H1 (cell line): ENCODE measurements at regions of chr10 and their contacts with region 1.

Region 1: GRCh38 chr10:120221873-120222485 is 235.0 kb upstream of the PLPP4 start:
- DNase-seq: peak; percentile 39 to 58
- H3K4me3 ChIP-seq: no peak overlapping the region
- H3K27ac ChIP-seq: no peak overlapping the region
- H3K4me1 ChIP-seq: no peaks in the 10 kb centered on the region
- H3K27me3 ChIP-seq: peaks cover 0 to 1% (median 0%) of the 10 kb centered on the region in 4 experiments; a peak in 1 of 7 replicates
- CTCF ChIP-seq: peak; percentile 28 to 84 (median 74)
- EP300 ChIP-seq: no peak
- POLR2A ChIP-seq: no peak
- RAD21 ChIP-seq: peak; percentile 93 to 94

Region 2: GRCh38 chr10:120131183-120131582 is 90.8 kb before region 1 on chr10:
- CTCF ChIA-PET with region 1: no interaction called
- POLR2A ChIA-PET with region 1: no interaction called
- DNase-seq: peak; percentile 29 to 83
- H3K4me3 ChIP-seq: no peak overlapping the region; a peak in 1 of 8 replicates
- H3K27ac ChIP-seq: no peak overlapping the region
- H3K4me1 ChIP-seq: peaks cover 3 to 14% (median 9%) of the 10 kb centered on the region in 4 experiments; a peak in 6 of 7 replicates
- H3K27me3 ChIP-seq: no peaks in the 10 kb centered on the region
- CTCF ChIP-seq: no peak
- EP300 ChIP-seq: 0 out of 3 replicates have a peak, but pooled peaks of 1 of the 2 experiments have one; percentile 28
- POLR2A ChIP-seq: no peak
- RAD21 ChIP-seq: peak in 1 of 2 experiments; percentile 25; a peak in 1 of 4 replicates

Region 3: GRCh38 chr10:120209124-120209762 is 12.7 kb before region 1 on chr10:
- CTCF ChIA-PET with region 1: interaction called, 43 read pairs
- POLR2A ChIA-PET with region 1: no interaction called
- DNase-seq: no peak
- H3K4me3 ChIP-seq: no peak overlapping the region
- H3K27ac ChIP-seq: no peak overlapping the region
- H3K4me1 ChIP-seq: no peaks in the 10 kb centered on the region
- H3K27me3 ChIP-seq: no peaks in the 10 kb centered on the region
- CTCF ChIP-seq: no peak
- EP300 ChIP-seq: no peak
- POLR2A ChIP-seq: no peak
- RAD21 ChIP-seq: no peak

Region 4: DNA sequence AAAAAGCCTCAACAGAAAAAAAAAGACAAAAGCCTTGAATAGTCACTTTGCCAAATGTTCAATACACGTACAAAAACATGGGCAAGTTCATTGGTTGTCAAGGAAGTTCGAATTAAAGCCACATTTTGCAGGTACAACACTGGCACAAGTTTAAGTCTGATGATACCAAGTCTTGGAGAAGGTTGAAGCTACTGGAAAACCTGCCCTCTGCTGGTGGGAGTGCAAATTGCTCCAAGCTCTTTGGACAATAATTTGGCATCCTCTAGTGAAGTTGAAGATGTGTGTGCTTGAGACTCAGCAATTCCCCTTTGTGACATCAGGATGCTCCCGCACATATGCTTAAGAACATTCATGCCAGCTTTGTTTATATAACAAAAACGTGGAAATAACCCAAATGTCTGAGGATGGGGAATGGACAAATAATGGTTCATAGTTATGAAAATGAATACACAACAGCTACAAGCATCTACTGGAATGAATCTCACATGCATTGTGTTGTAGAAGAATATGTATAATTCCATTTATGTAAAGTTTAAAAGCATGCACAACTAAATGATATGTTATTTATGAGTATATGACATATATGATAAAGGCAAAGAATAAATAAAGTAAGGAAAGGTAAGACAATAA is 115.0 kb after region 1 on chr10:
- CTCF ChIA-PET with region 1: interaction called, 46 read pairs
- POLR2A ChIA-PET with region 1: no interaction called
- DNase-seq: peak; percentile 25 to 87
- H3K4me3 ChIP-seq: no peak overlapping the region
- H3K27ac ChIP-seq: no peak overlapping the region
- H3K4me1 ChIP-seq: no peaks in the 10 kb centered on the region
- H3K27me3 ChIP-seq: no peaks in the 10 kb centered on the region
- CTCF ChIP-seq: peak in 2 of 3 experiments; percentile 82 to 91; a peak in 3 of 4 replicates
- EP300 ChIP-seq: no peak
- POLR2A ChIP-seq: no peak
- RAD21 ChIP-seq: peak; percentile 84 to 87

Region 5: GRCh38 chr10:120387326-120387725 is 165.3 kb after region 1 on chr10:
- CTCF ChIA-PET with region 1: no interaction called
- POLR2A ChIA-PET with region 1: no interaction called
- DNase-seq: no peak
- H3K4me3 ChIP-seq: no peak overlapping the region
- H3K27ac ChIP-seq: no peak overlapping the region
- H3K4me1 ChIP-seq: peaks cover 0 to 8% (median 0%) of the 10 kb centered on the region in 4 experiments; a peak in 2 of 7 replicates
- H3K27me3 ChIP-seq: no peaks in the 10 kb centered on the region
- CTCF ChIP-seq: no peak
- EP300 ChIP-seq: no peak
- POLR2A ChIP-seq: no peak
- RAD21 ChIP-seq: no peak